K562 (cell line): ENCODE measurements at regions of chr9 and their contacts with region 1.

Region 1: GRCh38 chr9:120875954-120876841 is 790 bp downstream of the PHF19 start:
- DNase-seq: peak; percentile 100
- ATAC-seq: peak; percentile 84
- H3K4me3 ChIP-seq: peak overlapping the region; percentile 74
- H3K27ac ChIP-seq: peak overlapping the region; percentile 95
- H3K4me1 ChIP-seq: peaks cover 45 to 50% of the 10 kb centered on the region in 2 experiments
- H3K27me3 ChIP-seq: no peaks in the 10 kb centered on the region; a peak in 1 of 5 replicates
- CTCF ChIP-seq: peak in 1 of 3 experiments; percentile 30; a peak in 2 of 6 replicates
- EP300 ChIP-seq: peak; percentile 91
- POLR2A ChIP-seq: no peak
- RAD21 ChIP-seq: no peak

Region 2: DNA sequence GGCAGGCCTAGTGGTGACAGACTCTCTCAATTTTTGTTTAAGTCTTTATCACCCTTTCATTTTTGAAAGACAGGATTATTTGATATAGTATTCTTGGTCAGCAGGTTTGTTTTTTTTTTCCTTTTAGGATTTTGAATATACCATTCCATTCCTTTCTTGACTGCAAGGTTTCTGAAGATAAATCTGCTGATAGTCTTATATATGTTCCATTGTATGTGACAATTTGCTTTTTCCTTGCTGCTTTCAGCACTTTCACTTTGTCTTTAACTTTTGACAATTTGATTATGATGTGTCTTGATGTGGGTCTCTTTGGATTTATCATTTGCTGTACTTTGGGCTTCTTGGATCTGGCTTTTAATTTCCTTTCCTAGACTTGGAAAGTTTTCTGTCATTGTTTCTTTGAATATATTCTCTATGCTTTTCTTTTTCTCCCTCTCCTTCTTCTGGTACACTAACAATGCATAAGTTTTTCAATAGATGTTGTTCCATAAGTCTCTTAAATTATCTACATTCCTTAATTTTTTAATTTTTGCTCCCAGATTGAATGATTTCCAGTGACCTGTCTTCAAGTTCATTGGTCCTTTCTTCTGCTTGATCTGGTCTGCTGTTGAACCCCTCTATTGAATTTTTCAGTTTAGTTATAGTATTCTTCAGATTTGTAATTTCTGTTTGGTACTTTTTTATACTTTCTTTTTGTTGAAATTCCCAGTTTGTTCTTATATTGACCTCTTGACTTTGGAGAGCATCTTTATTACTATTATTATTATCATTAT is 68.4 kb before region 1 on chr9:
- CTCF ChIA-PET with region 1: no interaction called
- POLR2A ChIA-PET with region 1: interaction called, 25 read pairs
- in situ Hi-C with region 1: loop called (anchors 5 kb)
- intact Hi-C with region 1: loop called (anchors 1 kb)
- DNase-seq: no peak
- ATAC-seq: peak; percentile 58; the same call in 2 of the 3 replicates
- H3K4me3 ChIP-seq: no peak overlapping the region
- H3K27ac ChIP-seq: no peak overlapping the region
- H3K4me1 ChIP-seq: no peaks in the 10 kb centered on the region
- H3K27me3 ChIP-seq: no peaks in the 10 kb centered on the region
- CTCF ChIP-seq: no peak
- EP300 ChIP-seq: no peak
- POLR2A ChIP-seq: no peak
- RAD21 ChIP-seq: no peak

Region 3: GRCh38 chr9:120856700-120857099 is 19.5 kb before region 1 on chr9:
- CTCF ChIA-PET with region 1: no interaction called
- POLR2A ChIA-PET with region 1: interaction called, 14 read pairs
- in situ Hi-C with region 1: no loop called
- intact Hi-C with region 1: no loop called
- DNase-seq: no peak
- ATAC-seq: peak; percentile 10
- H3K4me3 ChIP-seq: no peak overlapping the region
- H3K27ac ChIP-seq: no peak overlapping the region
- H3K4me1 ChIP-seq: peaks cover 0 to 7% of the 10 kb centered on the region in 2 experiments; a peak in 1 of 5 replicates
- H3K27me3 ChIP-seq: no peaks in the 10 kb centered on the region
- CTCF ChIP-seq: no peak
- EP300 ChIP-seq: no peak
- POLR2A ChIP-seq: no peak
- RAD21 ChIP-seq: no peak

Region 4: DNA sequence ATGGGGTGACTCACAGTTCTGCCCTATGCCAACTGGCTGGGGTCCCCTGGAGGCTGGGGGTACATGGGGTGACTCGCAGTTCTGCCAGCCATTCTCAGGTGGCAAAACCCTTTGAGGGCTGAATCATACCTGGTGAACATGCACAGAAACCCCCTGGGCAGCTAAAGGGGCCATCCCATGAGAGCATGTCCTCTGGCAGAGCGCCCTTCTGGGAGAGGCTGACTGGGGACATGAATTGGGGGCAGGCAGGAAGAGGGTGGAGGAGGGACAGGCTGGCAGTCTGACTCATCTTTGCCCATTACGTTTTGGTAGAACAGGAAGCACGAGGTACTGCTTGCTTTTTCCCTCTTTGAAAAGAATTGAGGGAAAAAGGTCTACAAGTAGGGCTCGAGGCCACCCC is 33.7 kb after region 1 on chr9:
- CTCF ChIA-PET with region 1: interaction called, 3 read pairs
- POLR2A ChIA-PET with region 1: interaction called, 464 read pairs
- in situ Hi-C with region 1: no loop called
- intact Hi-C with region 1: no loop called
- DNase-seq: no peak
- ATAC-seq: no peak
- H3K4me3 ChIP-seq: no peak overlapping the region
- H3K27ac ChIP-seq: no peak overlapping the region
- H3K4me1 ChIP-seq: peaks cover 20 to 22% of the 10 kb centered on the region in 2 experiments; a peak in 4 of 5 replicates
- H3K27me3 ChIP-seq: no peaks in the 10 kb centered on the region
- CTCF ChIP-seq: no peak
- EP300 ChIP-seq: no peak
- POLR2A ChIP-seq: no peak
- RAD21 ChIP-seq: no peak

Region 5: DNA sequence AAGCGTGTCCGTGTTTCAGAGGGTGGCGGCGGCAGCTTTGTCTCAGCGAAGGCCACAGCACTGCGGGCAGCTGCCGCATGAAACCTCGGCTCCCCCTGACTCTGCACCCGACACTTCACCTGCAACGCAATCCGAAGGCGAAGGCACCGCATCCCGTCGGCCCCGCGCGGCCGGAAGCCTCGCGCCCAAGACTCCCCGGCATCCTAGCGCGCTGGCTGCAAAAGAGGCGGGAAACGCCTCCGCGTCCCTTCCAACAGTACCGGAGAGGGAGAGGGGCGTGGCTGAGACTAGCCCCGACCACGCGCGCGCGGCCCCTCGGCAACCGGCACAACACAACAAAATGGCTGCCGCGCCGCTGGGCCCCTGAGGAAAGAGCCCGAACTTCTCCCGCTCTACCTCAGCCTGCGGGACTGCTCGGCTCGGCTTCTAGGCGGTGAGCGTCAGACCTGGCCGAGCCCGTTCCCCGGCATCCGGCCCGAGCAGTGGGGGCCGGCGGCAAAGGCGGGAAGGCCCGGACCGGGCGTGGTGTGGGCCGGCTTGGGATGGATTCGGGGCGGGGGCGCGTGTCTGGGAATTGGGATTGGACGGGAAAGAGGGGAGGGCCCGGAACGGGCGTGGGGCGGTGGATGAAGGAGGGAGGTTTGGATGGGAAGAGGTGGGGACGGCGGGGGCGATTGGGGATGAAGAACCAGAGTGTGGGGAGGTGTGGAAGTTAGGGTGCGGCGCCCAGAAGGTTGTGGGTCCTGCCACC is 198.6 kb after region 1 on chr9 and contains the start of gene CNTRL:
- CTCF ChIA-PET with region 1: no interaction called
- POLR2A ChIA-PET with region 1: no interaction called
- in situ Hi-C with region 1: no loop called
- intact Hi-C with region 1: loop called (anchors 10 kb)
- DNase-seq: peak; percentile 86 to 95 (median 86)
- ATAC-seq: peak; percentile 94
- H3K4me3 ChIP-seq: peak within 1 kb of the TSS; percentile 81
- H3K27ac ChIP-seq: peak within 1 kb of the TSS; percentile 93
- H3K4me1 ChIP-seq: peaks cover 7 to 20% of the 10 kb centered on the region in 2 experiments; a peak in 4 of 5 replicates
- H3K27me3 ChIP-seq: no peaks in the 10 kb centered on the region
- CTCF ChIP-seq: no peak
- EP300 ChIP-seq: no peak
- POLR2A ChIP-seq: peak; percentile 90
- RAD21 ChIP-seq: no peak
- polyA plus RNA-seq, gene CNTRL: 9.2 to 10.5 TPM